Activated CD4-positive, alpha-beta memory T cell treated with anti-CD3 and anti-CD28 coated beads for 36 hours (primary cell): ENCODE measurements at regions of chr16 and their contacts with region 1.

Region 1: GRCh38 chr16:3611146-3611975 is at the start of gene SLX4:
- DNase-seq: peak; percentile 94
- H3K4me3 Mint-ChIP-seq: peak within 1 kb of the TSS; percentile 95
- H3K27ac Mint-ChIP-seq: peak within 1 kb of the TSS; percentile 89
- H3K4me1 Mint-ChIP-seq: peaks cover 43% of the 10 kb centered on the region
- H3K27me3 Mint-ChIP-seq: no peaks in the 10 kb centered on the region
- total RNA-seq, gene SLX4: 13.4 to 15.3 TPM

Region 2: DNA sequence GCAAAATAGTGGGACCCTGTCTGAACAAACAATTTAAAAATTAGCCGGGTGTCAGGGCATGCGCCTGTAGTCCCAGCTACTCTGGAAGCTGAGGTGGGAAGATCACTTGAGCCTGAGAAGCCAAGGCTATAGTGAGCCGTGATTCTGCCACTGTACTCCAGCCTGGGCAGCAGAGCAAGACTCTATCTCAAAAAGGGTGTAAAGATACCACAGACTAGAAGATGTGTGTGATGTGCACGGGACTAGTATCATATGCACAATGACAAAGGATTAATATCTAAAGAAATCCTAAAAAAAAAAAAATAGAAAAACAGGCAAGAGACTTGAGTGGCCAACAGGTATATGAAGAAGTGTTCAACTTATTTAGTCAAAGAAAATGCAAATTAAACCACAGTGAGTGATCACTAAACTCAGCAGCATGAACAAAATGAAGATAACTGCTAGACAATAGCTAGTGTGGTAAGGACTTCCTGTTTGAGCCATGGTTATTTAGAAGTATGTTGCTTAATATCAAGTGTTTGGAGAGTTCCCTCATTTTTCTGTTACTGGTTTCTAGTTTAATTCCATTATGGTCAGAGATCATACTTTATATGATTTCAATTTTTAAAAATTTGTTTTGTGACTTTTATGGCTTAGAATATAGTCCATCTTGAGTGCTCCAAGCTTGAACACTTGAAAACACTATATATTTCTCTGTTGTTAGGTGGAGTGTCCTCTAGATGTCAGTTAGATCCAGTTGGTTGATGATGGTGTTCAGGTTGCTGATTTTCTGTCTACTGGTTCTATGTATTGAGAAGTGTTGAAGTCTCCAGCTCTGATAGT is 14.8 kb after region 1 on chr16:
- CTCF ChIA-PET with region 1: interaction called, 5 read pairs
- POLR2A ChIA-PET with region 1: no interaction called
- intact Hi-C with region 1: loop called (anchors 2 kb)
- DNase-seq: no peak
- H3K4me3 Mint-ChIP-seq: no peak overlapping the region
- H3K27ac Mint-ChIP-seq: peak overlapping the region; percentile 83
- H3K4me1 Mint-ChIP-seq: peaks cover 25% of the 10 kb centered on the region
- H3K27me3 Mint-ChIP-seq: no peaks in the 10 kb centered on the region